CD8-positive, alpha-beta memory T cell (primary cell): ENCODE measurements at regions of chr12 and their contacts with region 1.

Region 1: GRCh38 chr12:104108755-104109445 is 29.1 kb downstream of the NFYB start:
- DNase-seq: peak; percentile 65 to 88 (median 77)
- H3K4me3 ChIP-seq: no peak overlapping the region
- H3K4me3 Mint-ChIP-seq: peak overlapping the region in 2 of 7 donors; percentile 35 to 57
- H3K27ac ChIP-seq: no peak overlapping the region
- H3K27ac Mint-ChIP-seq: peak overlapping the region in 4 of 8 donors; percentile 0 to 71 (median 40)
- H3K4me1 ChIP-seq: peaks cover 8% of the 10 kb centered on the region
- H3K4me1 Mint-ChIP-seq: peaks cover 8 to 16% (median 16%) of the 10 kb centered on the region in 3 donors
- H3K27me3 ChIP-seq: no peaks in the 10 kb centered on the region
- H3K27me3 Mint-ChIP-seq: no peaks in the 10 kb centered on the region

Region 2: GRCh38 chr12:103884316-103884715 is 224.6 kb before region 1 on chr12:
- CTCF ChIA-PET with region 1: interaction called, 10 read pairs
- POLR2A ChIA-PET with region 1: no interaction called
- DNase-seq: peak in 3 of 5 donors; percentile 28 to 66 (median 50)
- H3K4me3 ChIP-seq: no peak overlapping the region
- H3K4me3 Mint-ChIP-seq: no peak overlapping the region
- H3K27ac ChIP-seq: no peak overlapping the region
- H3K27ac Mint-ChIP-seq: no peak overlapping the region
- H3K4me1 ChIP-seq: no peaks in the 10 kb centered on the region
- H3K4me1 Mint-ChIP-seq: peaks cover 4 to 8% (median 5%) of the 10 kb centered on the region in 3 donors
- H3K27me3 ChIP-seq: no peaks in the 10 kb centered on the region
- H3K27me3 Mint-ChIP-seq: no peaks in the 10 kb centered on the region

Region 3: GRCh38 chr12:104057771-104058197 is 51.1 kb before region 1 on chr12:
- CTCF ChIA-PET with region 1: interaction called, 11 read pairs
- POLR2A ChIA-PET with region 1: no interaction called
- DNase-seq: peak in 2 of 5 donors; percentile 10 to 17
- H3K4me3 ChIP-seq: no peak overlapping the region
- H3K4me3 Mint-ChIP-seq: no peak overlapping the region
- H3K27ac ChIP-seq: no peak overlapping the region
- H3K27ac Mint-ChIP-seq: no peak overlapping the region
- H3K4me1 ChIP-seq: no peaks in the 10 kb centered on the region
- H3K4me1 Mint-ChIP-seq: no peaks in the 10 kb centered on the region
- H3K27me3 ChIP-seq: no peaks in the 10 kb centered on the region
- H3K27me3 Mint-ChIP-seq: peaks cover 13 to 50% of the 10 kb centered on the region in 2 donors

Region 4: DNA sequence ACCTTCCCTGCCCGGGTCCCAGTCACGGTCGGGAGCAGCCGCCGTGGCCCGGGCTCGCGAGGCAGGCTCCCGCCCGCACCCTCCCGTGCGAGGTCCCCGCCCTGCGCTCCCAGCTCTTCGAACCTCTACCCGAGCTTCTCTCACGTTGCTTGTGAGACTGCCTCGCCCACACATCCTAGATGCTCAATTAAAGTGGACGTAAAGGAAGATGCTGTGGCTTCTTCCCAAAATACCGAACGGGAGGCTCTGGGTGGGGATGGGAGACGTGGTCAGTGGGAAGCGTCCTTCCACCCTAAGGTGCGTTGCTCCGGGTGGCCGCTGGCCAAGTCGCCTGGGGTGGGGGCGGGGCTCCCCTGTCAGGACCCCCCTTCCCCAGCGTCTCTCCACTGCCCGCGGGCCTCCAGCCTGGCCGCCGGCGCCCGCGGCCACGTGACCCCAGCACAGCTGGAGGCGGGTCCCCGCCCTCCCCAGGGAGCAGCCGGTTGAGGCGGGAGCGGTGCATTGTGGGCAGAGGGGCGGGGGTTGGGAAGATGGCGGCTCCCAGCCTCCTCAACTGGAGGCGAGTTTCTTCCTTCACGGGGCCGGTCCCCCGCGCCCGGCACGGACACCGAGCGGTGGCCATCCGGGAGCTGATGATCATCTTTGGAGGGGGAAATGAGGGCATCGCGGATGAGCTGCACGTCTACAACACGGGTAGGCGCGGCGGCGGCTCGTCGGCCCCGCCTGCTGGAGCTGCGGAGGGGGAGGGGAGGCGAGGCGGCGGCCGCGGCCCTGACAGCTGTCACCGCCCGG is 44.7 kb before region 1 on chr12 and contains the start of gene HCFC2:
- CTCF ChIA-PET with region 1: interaction called, 16 read pairs
- POLR2A ChIA-PET with region 1: interaction called, 4 read pairs
- DNase-seq: peak; percentile 83 to 90 (median 87)
- H3K4me3 ChIP-seq: peak within 1 kb of the TSS; percentile 99
- H3K4me3 Mint-ChIP-seq: peak within 1 kb of the TSS; percentile 92 to 97 (median 95)
- H3K27ac ChIP-seq: peak within 1 kb of the TSS; percentile 84
- H3K27ac Mint-ChIP-seq: peak within 1 kb of the TSS; percentile 82 to 95 (median 91)
- H3K4me1 ChIP-seq: peaks cover 9% of the 10 kb centered on the region
- H3K4me1 Mint-ChIP-seq: peaks cover 24 to 36% (median 31%) of the 10 kb centered on the region in 3 donors
- H3K27me3 ChIP-seq: no peaks in the 10 kb centered on the region
- H3K27me3 Mint-ChIP-seq: peaks cover 3 to 22% of the 10 kb centered on the region in 2 donors
- total RNA-seq, gene HCFC2: 12.5 to 13.0 TPM

Region 5: GRCh38 chr12:104097954-104098353 is 10.9 kb before region 1 on chr12:
- CTCF ChIA-PET with region 1: interaction called, 13 read pairs
- POLR2A ChIA-PET with region 1: no interaction called
- DNase-seq: no peak
- H3K4me3 ChIP-seq: no peak overlapping the region
- H3K4me3 Mint-ChIP-seq: no peak overlapping the region
- H3K27ac ChIP-seq: no peak overlapping the region
- H3K27ac Mint-ChIP-seq: no peak overlapping the region
- H3K4me1 ChIP-seq: no peaks in the 10 kb centered on the region
- H3K4me1 Mint-ChIP-seq: peaks cover 3 to 8% (median 6%) of the 10 kb centered on the region in 3 donors
- H3K27me3 ChIP-seq: no peaks in the 10 kb centered on the region
- H3K27me3 Mint-ChIP-seq: no peaks in the 10 kb centered on the region

Region 6: GRCh38 chr12:104121001-104121400 is 12.1 kb after region 1 on chr12:
- CTCF ChIA-PET with region 1: interaction called, 12 read pairs
- POLR2A ChIA-PET with region 1: no interaction called
- DNase-seq: no peak
- H3K4me3 ChIP-seq: no peak overlapping the region
- H3K4me3 Mint-ChIP-seq: no peak overlapping the region
- H3K27ac ChIP-seq: no peak overlapping the region
- H3K27ac Mint-ChIP-seq: peak overlapping the region in 1 of 8 donors; percentile 10
- H3K4me1 ChIP-seq: no peaks in the 10 kb centered on the region
- H3K4me1 Mint-ChIP-seq: peaks cover under 1 to 12% (median 7%) of the 10 kb centered on the region in 3 donors
- H3K27me3 ChIP-seq: no peaks in the 10 kb centered on the region
- H3K27me3 Mint-ChIP-seq: no peaks in the 10 kb centered on the region

Region 7: DNA sequence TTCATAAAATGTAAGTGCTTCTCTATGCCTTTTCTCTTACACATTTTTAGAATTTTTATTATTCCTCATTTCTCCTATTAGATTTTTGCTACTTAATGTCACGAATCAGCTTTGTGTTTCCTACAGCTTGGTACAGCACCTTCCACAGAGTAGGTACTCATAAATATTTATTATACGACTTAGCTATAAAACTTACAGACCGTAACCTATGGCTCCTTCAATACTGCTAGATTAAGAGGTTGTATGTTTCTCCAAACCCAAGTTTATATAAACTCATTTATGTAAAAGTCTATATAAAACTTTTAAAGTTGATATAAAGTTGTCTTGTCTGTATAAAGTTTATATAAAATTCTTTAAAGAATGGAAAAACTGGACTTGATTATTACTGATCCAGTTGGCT is 17.6 kb after region 1 on chr12:
- CTCF ChIA-PET with region 1: interaction called, 12 read pairs
- POLR2A ChIA-PET with region 1: no interaction called
- DNase-seq: no peak
- H3K4me3 ChIP-seq: no peak overlapping the region
- H3K4me3 Mint-ChIP-seq: no peak overlapping the region
- H3K27ac ChIP-seq: no peak overlapping the region
- H3K27ac Mint-ChIP-seq: peak overlapping the region in 2 of 8 donors; percentile 2 to 94
- H3K4me1 ChIP-seq: no peaks in the 10 kb centered on the region
- H3K4me1 Mint-ChIP-seq: peaks cover 24 to 28% (median 26%) of the 10 kb centered on the region in 3 donors
- H3K27me3 ChIP-seq: no peaks in the 10 kb centered on the region
- H3K27me3 Mint-ChIP-seq: no peaks in the 10 kb centered on the region